MCF 10A (cell line): ENCODE measurements at regions of chr1 and their contacts with region 1.

Region 1: GRCh38 chr1:115469703-115470476 is 131.8 kb upstream of the NGF start:
- DNase-seq: peak; percentile 72
- H3K4me3 Mint-ChIP-seq: no peak overlapping the region
- H3K27ac Mint-ChIP-seq: no peak overlapping the region
- H3K4me1 Mint-ChIP-seq: peaks cover 20% of the 10 kb centered on the region
- H3K27me3 Mint-ChIP-seq: no peaks in the 10 kb centered on the region
- CTCF ChIP-seq: peak; percentile 96

Region 2: GRCh38 chr1:114979278-114979891 is 490.5 kb before region 1 on chr1:
- CTCF ChIA-PET with region 1: no interaction called
- POLR2A ChIA-PET with region 1: no interaction called
- intact Hi-C with region 1: loop called (anchors 5 kb)
- DNase-seq: peak; percentile 71
- H3K4me3 Mint-ChIP-seq: no peak overlapping the region
- H3K27ac Mint-ChIP-seq: no peak overlapping the region
- H3K4me1 Mint-ChIP-seq: no peaks in the 10 kb centered on the region
- H3K27me3 Mint-ChIP-seq: peaks cover 64% of the 10 kb centered on the region
- CTCF ChIP-seq: peak; percentile 66

Region 3: DNA sequence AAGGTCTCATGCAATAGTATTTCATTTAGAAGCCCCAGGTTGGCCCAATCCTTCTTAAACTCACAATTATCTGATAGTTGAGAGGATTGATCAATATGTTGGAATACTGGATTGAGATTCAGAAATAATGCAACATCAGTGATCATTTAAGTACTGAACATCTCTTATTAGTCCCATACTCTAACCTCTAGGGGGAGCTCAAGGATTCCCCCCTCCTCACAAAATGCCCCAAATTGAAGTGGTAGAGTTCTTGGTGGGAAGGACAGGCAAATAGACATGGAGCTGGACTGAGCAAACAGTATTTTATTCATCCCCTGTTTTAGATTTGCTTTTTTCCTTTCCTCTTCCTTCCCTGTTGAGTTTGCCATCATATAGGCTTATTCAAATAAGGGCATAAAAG is 194.7 kb before region 1 on chr1:
- CTCF ChIA-PET with region 1: interaction called, 16 read pairs
- POLR2A ChIA-PET with region 1: no interaction called
- intact Hi-C with region 1: loop called (anchors 1 kb)
- DNase-seq: peak; percentile 48
- H3K4me3 Mint-ChIP-seq: no peak overlapping the region
- H3K27ac Mint-ChIP-seq: no peak overlapping the region
- H3K4me1 Mint-ChIP-seq: no peaks in the 10 kb centered on the region
- H3K27me3 Mint-ChIP-seq: no peaks in the 10 kb centered on the region
- CTCF ChIP-seq: peak; percentile 54

Region 4: GRCh38 chr1:115456441-115456961 is 13.4 kb before region 1 on chr1:
- CTCF ChIA-PET with region 1: interaction called, 17 read pairs
- POLR2A ChIA-PET with region 1: no interaction called
- intact Hi-C with region 1: no loop called
- DNase-seq: no peak
- H3K4me3 Mint-ChIP-seq: no peak overlapping the region
- H3K27ac Mint-ChIP-seq: peak overlapping the region; percentile 65
- H3K4me1 Mint-ChIP-seq: peaks cover 11% of the 10 kb centered on the region
- H3K27me3 Mint-ChIP-seq: no peaks in the 10 kb centered on the region
- CTCF ChIP-seq: no peak

Region 5: DNA sequence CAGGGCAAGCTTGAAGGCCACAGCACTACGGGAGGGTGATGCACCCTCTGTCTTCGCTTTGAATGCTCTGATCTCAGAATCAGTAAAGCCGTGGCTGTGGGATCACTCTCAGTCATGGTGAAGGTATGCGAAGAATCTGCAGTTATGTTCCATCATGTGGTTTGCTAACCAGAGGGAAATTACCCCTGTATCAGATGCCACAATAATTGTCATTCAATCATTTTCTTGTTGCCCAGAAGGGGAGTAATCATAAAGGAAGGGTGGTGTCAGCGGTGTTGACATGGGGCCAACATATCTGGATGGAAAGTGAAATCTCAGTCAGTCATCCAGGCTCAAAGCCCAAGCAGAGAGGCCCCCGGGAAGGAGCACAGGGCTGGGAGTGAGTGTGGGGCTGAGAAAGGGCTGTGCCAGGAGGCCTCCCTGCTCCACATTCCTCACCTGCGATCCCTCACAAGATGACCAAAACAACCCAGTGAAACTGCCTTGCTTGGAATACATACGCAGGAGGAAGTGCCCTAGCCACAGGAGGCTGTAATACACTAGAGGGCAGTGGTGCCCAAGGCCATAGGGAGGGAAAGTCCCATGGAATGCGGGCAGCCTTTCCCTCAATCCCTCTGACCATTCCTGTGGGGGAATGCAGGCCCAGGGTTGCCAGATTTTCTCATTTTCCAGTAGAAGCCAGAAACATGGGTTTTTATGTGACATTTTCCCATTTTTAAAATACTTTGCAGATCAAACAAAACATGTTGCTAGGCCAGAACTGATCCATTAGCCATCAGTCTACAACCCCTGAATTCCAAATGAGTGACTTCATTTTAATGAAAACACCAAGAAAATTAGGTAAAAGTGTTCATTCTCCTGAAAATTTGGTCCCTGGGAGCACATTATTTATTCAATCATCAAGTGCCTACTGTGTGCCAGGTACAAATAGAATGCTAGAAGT is 76.2 kb after region 1 on chr1:
- CTCF ChIA-PET with region 1: no interaction called
- POLR2A ChIA-PET with region 1: no interaction called
- intact Hi-C with region 1: loop called (anchors 5 kb)
- DNase-seq: peak; percentile 84
- H3K4me3 Mint-ChIP-seq: peak overlapping the region; percentile 57
- H3K27ac Mint-ChIP-seq: peak overlapping the region; percentile 92
- H3K4me1 Mint-ChIP-seq: peaks cover 15% of the 10 kb centered on the region
- H3K27me3 Mint-ChIP-seq: no peaks in the 10 kb centered on the region
- CTCF ChIP-seq: peak; percentile 61

Region 6: DNA sequence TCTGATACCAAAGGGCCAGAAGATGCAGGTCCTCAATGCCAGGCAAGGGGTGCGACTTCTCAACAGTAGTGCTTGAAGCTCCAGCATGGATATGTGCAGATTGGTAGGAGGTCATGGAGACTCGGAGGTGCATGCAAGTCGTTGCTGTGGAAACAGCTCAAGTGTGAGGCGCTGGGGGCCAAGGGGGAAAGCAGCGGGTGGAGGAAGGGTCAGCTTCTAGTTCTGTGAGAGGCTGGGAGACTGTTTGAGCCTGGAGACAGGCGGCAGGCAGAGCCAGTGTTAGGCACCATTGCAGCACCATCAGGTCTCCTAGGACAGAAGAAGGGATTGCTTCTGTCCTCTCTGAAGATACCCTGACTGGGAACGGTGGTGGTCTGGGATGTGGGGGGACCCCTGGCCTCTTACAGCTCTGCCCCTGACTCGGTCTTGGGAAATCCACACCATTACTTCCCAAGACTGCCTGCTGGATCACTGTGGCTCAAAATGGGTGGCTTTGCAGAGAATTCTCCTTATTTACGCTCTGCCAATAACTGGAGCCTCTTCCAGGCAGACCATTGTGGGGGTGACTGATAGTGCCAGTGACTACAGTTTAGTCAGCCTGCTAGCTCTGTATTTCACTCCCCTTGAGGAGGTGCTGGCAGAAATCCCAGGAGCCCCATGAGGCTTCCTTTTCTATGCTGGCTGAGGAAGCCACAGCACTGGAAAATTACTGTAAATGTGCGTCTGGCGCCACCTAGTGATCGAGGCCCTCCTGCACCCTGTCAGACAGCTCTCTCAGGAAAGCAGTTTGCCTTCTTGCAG is 125.6 kb after region 1 on chr1:
- CTCF ChIA-PET with region 1: interaction called, 39 read pairs
- POLR2A ChIA-PET with region 1: no interaction called
- intact Hi-C with region 1: loop called (anchors 1 kb)
- DNase-seq: peak; percentile 92
- H3K4me3 Mint-ChIP-seq: no peak overlapping the region
- H3K27ac Mint-ChIP-seq: no peak overlapping the region
- H3K4me1 Mint-ChIP-seq: no peaks in the 10 kb centered on the region
- H3K27me3 Mint-ChIP-seq: no peaks in the 10 kb centered on the region
- CTCF ChIP-seq: peak; percentile 96